B cell (primary cell): ENCODE measurements at regions of chr16 and their contacts with region 1.

Region 1: DNA sequence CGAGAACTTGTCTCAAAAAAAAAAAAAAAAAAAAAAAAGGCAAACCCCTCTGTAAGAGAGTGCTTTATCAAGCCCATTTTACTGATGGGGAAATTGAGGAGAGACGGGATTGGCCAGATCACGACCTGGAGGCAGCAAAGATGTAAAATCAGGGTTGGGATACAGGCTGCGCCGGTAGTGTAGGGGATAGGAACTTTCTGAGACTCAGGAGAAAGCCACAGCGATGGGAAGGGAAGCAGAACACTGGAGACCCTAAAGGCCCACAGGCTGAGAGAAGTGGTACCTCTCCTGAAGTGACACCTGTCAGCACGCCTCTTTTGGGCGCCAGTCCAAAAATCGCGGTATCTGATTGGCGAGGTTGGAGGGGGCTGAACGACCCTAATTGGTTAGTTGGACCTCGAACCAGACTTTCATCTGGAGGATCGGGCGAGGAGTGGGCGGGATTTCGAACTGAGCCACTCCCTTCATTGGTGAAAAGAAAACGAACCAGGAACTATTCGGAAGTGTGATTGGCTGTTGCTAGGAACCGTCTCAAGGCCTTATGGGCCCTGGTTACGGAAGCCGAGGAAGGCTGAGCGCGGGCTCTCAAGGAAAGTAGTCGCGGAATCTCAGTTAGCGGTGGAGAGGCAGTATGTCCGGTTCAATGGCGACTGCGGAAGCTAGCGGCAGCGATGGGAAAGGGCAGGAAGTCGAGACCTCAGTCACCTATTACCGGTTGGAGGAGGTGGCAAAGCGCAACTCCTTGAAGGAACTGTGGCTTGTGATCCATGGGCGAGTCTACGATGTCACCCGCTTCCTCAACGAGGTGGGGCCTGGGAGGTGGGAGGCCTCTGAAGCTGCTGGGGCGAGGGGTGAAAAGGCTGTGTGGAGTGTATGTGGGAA is at the start of gene CYB5B:
- DNase-seq: peak; percentile 97
- ATAC-seq: peak; percentile 95
- H3K4me3 ChIP-seq: peak within 1 kb of the TSS; percentile 43 to 95 (median 89)
- H3K4me3 Mint-ChIP-seq: peak within 1 kb of the TSS; percentile 93
- H3K27ac ChIP-seq: peak within 1 kb of the TSS; percentile 52 to 88
- H3K27ac Mint-ChIP-seq: peak within 1 kb of the TSS; percentile 91
- H3K4me1 ChIP-seq: peaks cover 8 to 12% of the 10 kb centered on the region in 2 donors
- H3K4me1 Mint-ChIP-seq: peaks cover 25% of the 10 kb centered on the region
- H3K27me3 ChIP-seq: no peaks in the 10 kb centered on the region
- H3K27me3 Mint-ChIP-seq: no peaks in the 10 kb centered on the region
- CTCF ChIP-seq: no peak
- total RNA-seq, gene CYB5B: 56.7 and 64.7 TPM in 2 replicates

Region 2: GRCh38 chr16:68995011-68995504 is 429.2 kb before region 1 on chr16:
- CTCF ChIA-PET with region 1: no interaction called
- POLR2A ChIA-PET with region 1: no interaction called
- intact Hi-C with region 1: no loop called
- DNase-seq: no peak
- ATAC-seq: no peak
- H3K4me3 ChIP-seq: no peak overlapping the region
- H3K4me3 Mint-ChIP-seq: no peak overlapping the region
- H3K27ac ChIP-seq: no peak overlapping the region
- H3K27ac Mint-ChIP-seq: no peak overlapping the region
- H3K4me1 ChIP-seq: no peaks in the 10 kb centered on the region
- H3K4me1 Mint-ChIP-seq: no peaks in the 10 kb centered on the region
- H3K27me3 ChIP-seq: no peaks in the 10 kb centered on the region
- H3K27me3 Mint-ChIP-seq: no peaks in the 10 kb centered on the region
- CTCF ChIP-seq: no peak

Region 3: DNA sequence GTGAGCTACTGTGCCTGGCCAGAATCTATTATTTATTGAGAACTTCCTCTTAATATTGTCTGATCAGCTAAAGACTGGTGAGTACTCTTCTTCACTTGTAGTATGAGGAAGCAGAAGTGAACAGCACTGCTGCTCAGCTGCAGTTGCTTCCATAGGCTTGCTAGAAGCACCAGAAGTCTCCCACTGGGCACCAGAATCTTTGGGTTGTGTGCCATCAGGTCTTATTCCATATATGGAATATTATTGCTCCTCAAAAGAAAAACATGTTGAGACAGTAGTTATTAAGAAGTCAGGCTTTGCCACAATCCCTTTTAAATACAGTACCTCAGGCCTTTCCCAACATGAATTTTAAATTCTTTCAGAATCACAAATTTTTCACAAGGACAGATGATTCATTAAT is 220.1 kb before region 1 on chr16:
- CTCF ChIA-PET with region 1: no interaction called
- POLR2A ChIA-PET with region 1: no interaction called
- intact Hi-C with region 1: no loop called
- DNase-seq: no peak
- ATAC-seq: no peak
- H3K4me3 ChIP-seq: no peak overlapping the region
- H3K4me3 Mint-ChIP-seq: no peak overlapping the region
- H3K27ac ChIP-seq: no peak overlapping the region
- H3K27ac Mint-ChIP-seq: no peak overlapping the region
- H3K4me1 ChIP-seq: peaks cover 0 to 2% of the 10 kb centered on the region in 2 donors
- H3K4me1 Mint-ChIP-seq: peaks cover 12% of the 10 kb centered on the region
- H3K27me3 ChIP-seq: no peaks in the 10 kb centered on the region
- H3K27me3 Mint-ChIP-seq: no peaks in the 10 kb centered on the region
- CTCF ChIP-seq: no peak

Region 4: DNA sequence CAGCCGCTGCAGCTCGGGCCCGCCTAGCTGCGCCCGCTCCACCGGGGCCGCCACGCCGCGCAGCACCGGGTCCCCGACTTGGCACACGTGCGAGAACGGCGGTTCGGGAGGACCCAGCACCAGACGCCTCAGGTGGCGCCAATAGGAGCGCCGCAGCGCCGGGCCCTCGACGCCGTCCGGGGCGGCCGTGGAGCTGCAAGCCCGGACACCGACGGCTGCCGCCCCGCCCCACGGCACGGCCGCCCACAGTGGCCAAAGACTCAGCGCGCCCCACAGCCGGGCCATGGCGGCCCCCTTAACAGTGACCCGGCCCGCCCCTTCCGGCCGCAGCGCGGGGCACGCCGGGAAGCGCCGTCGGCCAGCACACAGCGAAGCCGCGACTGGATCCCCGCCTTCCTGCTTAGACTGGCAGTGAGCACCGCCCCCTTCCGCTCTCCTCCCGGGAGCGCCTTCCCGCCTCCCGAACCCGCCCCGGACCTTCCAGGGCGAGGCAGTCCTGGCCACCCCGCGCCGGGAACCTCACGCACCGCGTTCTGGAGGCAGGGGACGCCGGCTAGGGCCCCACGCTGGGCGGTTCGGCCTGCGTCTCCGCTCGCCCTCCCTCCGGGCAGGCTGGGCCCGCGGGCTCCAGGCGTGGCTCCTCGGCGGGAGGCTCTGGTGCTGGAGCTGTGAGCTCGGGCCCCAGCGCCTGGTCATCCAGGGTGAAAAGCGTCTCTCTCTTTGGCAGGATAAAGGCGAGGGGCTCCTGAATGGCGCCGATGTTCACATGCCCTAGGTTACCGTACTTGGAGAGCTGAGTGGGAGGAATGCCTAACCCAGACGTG is 93.8 kb before region 1 on chr16 and contains the start of gene PDF:
- CTCF ChIA-PET with region 1: no interaction called
- POLR2A ChIA-PET with region 1: no interaction called
- intact Hi-C with region 1: loop called (anchors 1 kb)
- DNase-seq: peak; percentile 86
- ATAC-seq: peak; percentile 97
- H3K4me3 ChIP-seq: peak within 1 kb of the TSS; percentile 38 to 88 (median 70)
- H3K4me3 Mint-ChIP-seq: peak within 1 kb of the TSS; percentile 86
- H3K27ac ChIP-seq: peak within 1 kb of the TSS; percentile 41 to 88
- H3K27ac Mint-ChIP-seq: peak within 1 kb of the TSS; percentile 80
- H3K4me1 ChIP-seq: peaks cover 15 to 32% of the 10 kb centered on the region in 2 donors
- H3K4me1 Mint-ChIP-seq: peaks cover 44% of the 10 kb centered on the region
- H3K27me3 ChIP-seq: no peaks in the 10 kb centered on the region
- H3K27me3 Mint-ChIP-seq: no peaks in the 10 kb centered on the region
- CTCF ChIP-seq: no peak
- total RNA-seq, gene PDF: 9.2 and 9.6 TPM in 2 replicates

Region 5: DNA sequence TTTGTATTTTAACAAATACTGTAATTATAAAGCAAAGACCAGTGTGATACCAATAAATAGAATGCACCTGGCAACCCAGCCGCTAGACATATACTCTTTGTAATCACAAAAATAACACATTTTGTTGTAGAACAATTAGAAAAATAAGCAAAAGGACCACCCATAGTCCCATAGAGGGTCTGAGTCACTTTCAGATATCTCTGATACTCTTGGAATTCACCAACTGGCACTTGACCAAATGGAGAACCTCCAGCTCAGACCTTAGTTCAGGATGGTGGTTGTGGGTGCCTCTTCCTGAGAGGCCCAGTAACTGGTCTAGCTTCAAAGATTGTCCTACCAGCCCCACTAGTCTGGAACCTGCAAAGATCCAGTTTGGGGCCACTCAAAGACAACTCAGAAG is 37.7 kb before region 1 on chr16:
- CTCF ChIA-PET with region 1: no interaction called
- POLR2A ChIA-PET with region 1: no interaction called
- intact Hi-C with region 1: loop called (anchors 1 kb)
- DNase-seq: no peak
- ATAC-seq: no peak
- H3K4me3 ChIP-seq: peak overlapping the region in 1 of 5 experiments; percentile 64
- H3K4me3 Mint-ChIP-seq: peak overlapping the region; percentile 57
- H3K27ac ChIP-seq: no peak overlapping the region
- H3K27ac Mint-ChIP-seq: no peak overlapping the region
- H3K4me1 ChIP-seq: peaks cover 31 to 33% of the 10 kb centered on the region in 2 donors
- H3K4me1 Mint-ChIP-seq: peaks cover 30% of the 10 kb centered on the region
- H3K27me3 ChIP-seq: no peaks in the 10 kb centered on the region
- H3K27me3 Mint-ChIP-seq: no peaks in the 10 kb centered on the region
- CTCF ChIP-seq: no peak

Region 6: DNA sequence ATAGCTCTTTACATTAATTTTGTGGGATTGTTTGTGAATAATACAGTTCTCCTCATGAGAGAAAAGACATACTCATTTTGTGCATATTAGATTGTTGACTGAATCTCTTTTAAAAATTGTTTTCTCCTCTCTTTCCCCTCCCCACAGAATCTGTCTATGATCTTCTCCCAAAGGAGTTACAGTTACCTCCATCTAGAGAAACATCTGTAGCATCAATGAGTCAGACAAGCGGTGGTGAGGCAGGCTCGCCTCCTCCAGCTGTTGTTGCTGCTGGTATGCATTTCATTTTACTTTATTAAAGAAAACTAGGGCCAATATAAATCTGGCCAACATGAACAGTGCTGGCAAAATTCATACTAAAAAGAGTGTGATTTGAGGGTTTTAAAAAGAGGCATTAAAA is 202.0 kb after region 1 on chr16:
- CTCF ChIA-PET with region 1: no interaction called
- POLR2A ChIA-PET with region 1: no interaction called
- intact Hi-C with region 1: no loop called
- DNase-seq: no peak
- ATAC-seq: no peak
- H3K4me3 ChIP-seq: no peak overlapping the region
- H3K4me3 Mint-ChIP-seq: no peak overlapping the region
- H3K27ac ChIP-seq: no peak overlapping the region
- H3K27ac Mint-ChIP-seq: no peak overlapping the region
- H3K4me1 ChIP-seq: no peaks in the 10 kb centered on the region
- H3K4me1 Mint-ChIP-seq: peaks cover 3% of the 10 kb centered on the region
- H3K27me3 ChIP-seq: no peaks in the 10 kb centered on the region
- H3K27me3 Mint-ChIP-seq: no peaks in the 10 kb centered on the region
- CTCF ChIP-seq: no peak

Region 7: DNA sequence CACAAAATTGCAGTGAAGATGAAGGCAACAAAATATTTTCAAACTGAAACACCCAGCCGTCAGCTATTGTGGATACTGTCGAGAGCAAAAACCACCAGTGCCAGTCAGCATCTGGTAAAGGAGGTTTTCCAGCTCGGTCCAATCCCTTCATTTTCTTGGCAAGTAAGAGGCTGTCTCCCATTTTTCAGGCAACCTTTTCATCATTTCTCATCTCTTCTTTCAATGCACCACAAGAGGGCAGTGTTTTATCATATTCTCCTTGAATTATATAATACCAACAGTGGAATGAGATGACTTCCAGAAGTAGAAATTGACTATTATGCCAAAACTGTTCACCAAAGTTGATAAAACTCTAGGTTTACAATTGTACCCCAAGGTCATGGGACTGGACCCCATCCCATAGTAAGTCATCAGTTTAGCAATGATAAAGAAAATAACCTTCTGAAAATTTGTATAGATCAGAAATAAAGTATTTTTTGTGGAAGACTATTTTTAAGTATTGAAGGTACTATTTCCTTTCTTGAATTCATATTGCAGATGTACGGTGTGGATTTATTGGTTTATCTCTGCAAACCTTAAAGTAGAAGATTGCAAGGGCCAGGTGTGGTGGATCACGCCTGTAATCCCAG is 285.3 kb after region 1 on chr16:
- CTCF ChIA-PET with region 1: no interaction called
- POLR2A ChIA-PET with region 1: no interaction called
- intact Hi-C with region 1: no loop called
- DNase-seq: peak; percentile 71
- ATAC-seq: peak; percentile 36
- H3K4me3 ChIP-seq: no peak overlapping the region
- H3K4me3 Mint-ChIP-seq: no peak overlapping the region
- H3K27ac ChIP-seq: no peak overlapping the region
- H3K27ac Mint-ChIP-seq: no peak overlapping the region
- H3K4me1 ChIP-seq: no peaks in the 10 kb centered on the region
- H3K4me1 Mint-ChIP-seq: no peaks in the 10 kb centered on the region
- H3K27me3 ChIP-seq: no peaks in the 10 kb centered on the region
- H3K27me3 Mint-ChIP-seq: no peaks in the 10 kb centered on the region
- CTCF ChIP-seq: peak; percentile 85

Region 8: GRCh38 chr16:69726296-69727060 is 302.2 kb after region 1 on chr16 and contains the start of gene NQO1:
- CTCF ChIA-PET with region 1: no interaction called
- POLR2A ChIA-PET with region 1: no interaction called
- intact Hi-C with region 1: loop called (anchors 1 kb)
- DNase-seq: peak; percentile 86
- ATAC-seq: peak; percentile 99
- H3K4me3 ChIP-seq: peak within 1 kb of the TSS; percentile 59 to 68 (median 60)
- H3K4me3 Mint-ChIP-seq: peak within 1 kb of the TSS; percentile 99
- H3K27ac ChIP-seq: peak within 1 kb of the TSS; percentile 47 to 66
- H3K27ac Mint-ChIP-seq: peak within 1 kb of the TSS; percentile 96
- H3K4me1 ChIP-seq: peaks cover 11 to 15% of the 10 kb centered on the region in 2 donors
- H3K4me1 Mint-ChIP-seq: peaks cover 17% of the 10 kb centered on the region
- H3K27me3 ChIP-seq: no peaks in the 10 kb centered on the region
- H3K27me3 Mint-ChIP-seq: no peaks in the 10 kb centered on the region
- CTCF ChIP-seq: no peak
- total RNA-seq, gene NQO1: 1.1 and 2.3 TPM in 2 replicates